Kidney (tissue), 22 donors: ENCODE measurements at regions of chr7 and their contacts with region 1.

Region 1: GRCh38 chr7:129471402-129471827 is 30.9 kb upstream of the SMKR1 start:
- DNase-seq: no peak
- H3K4me3 ChIP-seq: no peak overlapping the region
- H3K27ac ChIP-seq: no peak overlapping the region
- H3K4me1 ChIP-seq: peaks cover 0 to 3% (median 3%) of the 10 kb centered on the region in 3 donors
- H3K27me3 ChIP-seq: no peaks in the 10 kb centered on the region
- CTCF ChIP-seq: no peak

Region 2: GRCh38 chr7:129367700-129368388 is 103.6 kb before region 1 on chr7:
- intact Hi-C with region 1: loop called (anchors 10 kb)
- DNase-seq: peak; percentile 79 to 88 (median 84)
- H3K4me3 ChIP-seq: peak overlapping the region in 2 of 3 donors; percentile 22 to 28
- H3K27ac ChIP-seq: no peak overlapping the region
- H3K4me1 ChIP-seq: peaks cover 0 to 9% (median 0%) of the 10 kb centered on the region in 3 donors
- H3K27me3 ChIP-seq: no peaks in the 10 kb centered on the region
- CTCF ChIP-seq: peak; percentile 85